Activated T-helper 2 cell treated with anti-CD3 and anti-CD28 coated beads, Interferon-gamma antibody, Interleukin-2, Interleukin-4, amounts not matched to agents 10 μg/mL and 5 μg/mL and 100 μg/mL, durations not matched to agents 14 hours and 24 hours and 36 hours (primary cell): ENCODE measurements at regions of chr15 and their contacts with region 1.

Region 1: GRCh38 chr15:58770857-58771620 is at the start of gene MINDY2:
- DNase-seq: peak; percentile 94
- H3K4me3 Mint-ChIP-seq: no peak within 1 kb of the TSS
- H3K27ac Mint-ChIP-seq: peak within 1 kb of the TSS; percentile 83
- H3K4me1 Mint-ChIP-seq: peaks cover 20% of the 10 kb centered on the region
- H3K27me3 Mint-ChIP-seq: no peaks in the 10 kb centered on the region
- total RNA-seq, gene MINDY2: 10.7 and 11.6 TPM in 2 replicates

Region 2: DNA sequence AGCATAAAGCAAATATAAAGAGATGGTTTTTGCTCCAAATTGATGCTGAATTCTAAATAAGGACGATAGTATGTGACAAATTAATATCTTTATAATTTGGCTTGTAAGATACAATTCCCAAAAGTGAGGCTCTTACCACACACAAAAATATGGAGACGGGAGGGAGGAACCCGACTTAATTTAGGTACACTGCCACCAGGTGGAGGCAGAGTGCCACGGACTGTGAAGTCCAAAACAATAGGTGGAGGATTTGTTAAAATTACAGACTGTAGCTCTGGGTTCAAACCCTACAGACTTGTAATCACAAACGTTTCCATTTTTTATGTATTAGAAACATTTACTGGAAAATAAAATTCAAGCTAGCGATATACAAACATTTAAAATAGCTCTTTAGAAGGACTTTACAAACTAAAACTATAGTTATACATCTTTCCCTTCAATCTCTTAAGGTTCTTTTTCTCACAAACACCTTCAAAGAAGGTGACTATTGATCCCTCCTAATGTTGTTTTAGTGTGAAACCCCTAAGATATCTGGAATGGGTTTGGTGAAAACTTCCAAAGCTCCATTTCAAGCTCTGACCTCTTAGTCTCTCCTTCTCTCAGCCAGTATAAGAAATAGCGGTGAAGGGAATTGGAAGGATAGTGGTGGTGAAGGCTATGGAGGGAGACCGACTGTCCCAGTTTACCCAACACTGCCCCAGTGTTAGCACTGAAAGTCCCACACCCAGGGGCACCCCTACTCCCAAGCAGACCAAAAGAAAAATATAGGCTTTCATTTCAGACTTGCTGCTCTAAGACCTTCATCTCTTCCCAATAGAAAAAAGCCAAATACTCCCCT is 543.1 kb before region 1 on chr15:
- intact Hi-C with region 1: loop called (anchors 5 kb)
- DNase-seq: peak; percentile 47
- H3K4me3 Mint-ChIP-seq: no peak overlapping the region
- H3K27ac Mint-ChIP-seq: no peak overlapping the region
- H3K4me1 Mint-ChIP-seq: peaks cover 8% of the 10 kb centered on the region
- H3K27me3 Mint-ChIP-seq: peaks cover 19% of the 10 kb centered on the region

Region 3: DNA sequence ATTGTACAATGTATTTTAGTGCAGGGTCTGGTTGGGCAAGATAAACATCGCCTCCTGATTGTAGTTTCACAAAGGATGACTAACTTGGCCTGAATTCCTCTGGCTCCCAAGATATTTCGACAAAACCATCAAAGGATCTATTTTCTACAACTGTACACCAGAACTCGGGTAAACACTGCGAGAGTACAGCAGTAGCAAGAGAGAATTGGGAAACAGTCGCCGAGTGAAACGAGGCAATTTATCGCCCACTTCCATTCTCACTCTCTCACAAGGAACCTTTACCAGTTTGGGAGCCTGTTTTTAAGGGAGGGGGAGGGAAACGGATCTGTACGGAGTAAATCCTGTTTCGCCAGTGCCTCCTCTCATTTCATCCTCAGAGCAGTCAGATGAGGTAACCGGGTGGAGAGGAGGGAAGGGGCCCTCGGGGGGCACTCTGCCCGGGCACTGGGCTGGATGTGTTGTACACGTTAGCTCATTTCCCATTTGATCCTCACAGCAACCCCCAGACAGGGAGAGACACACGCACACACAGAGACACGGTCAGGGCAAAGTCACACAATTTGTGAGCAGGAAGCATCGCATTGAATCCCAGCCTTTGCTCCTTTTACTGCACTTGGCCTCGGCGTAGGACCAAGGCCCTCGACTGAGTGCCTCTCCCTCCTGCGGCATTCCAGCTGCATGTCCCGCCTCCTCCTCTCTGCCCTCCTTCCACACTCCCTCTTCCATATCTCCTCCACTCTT is 219.1 kb before region 1 on chr15:
- intact Hi-C with region 1: loop called (anchors 5 kb)
- DNase-seq: no peak
- H3K4me3 Mint-ChIP-seq: no peak overlapping the region
- H3K27ac Mint-ChIP-seq: peak overlapping the region; percentile 91
- H3K4me1 Mint-ChIP-seq: peaks cover 39% of the 10 kb centered on the region
- H3K27me3 Mint-ChIP-seq: no peaks in the 10 kb centered on the region

Region 4: GRCh38 chr15:58641660-58642059 is 129.4 kb before region 1 on chr15:
- intact Hi-C with region 1: no loop called
- DNase-seq: no peak
- H3K4me3 Mint-ChIP-seq: no peak overlapping the region
- H3K27ac Mint-ChIP-seq: no peak overlapping the region
- H3K4me1 Mint-ChIP-seq: peaks cover 15% of the 10 kb centered on the region
- H3K27me3 Mint-ChIP-seq: no peaks in the 10 kb centered on the region

Region 5: DNA sequence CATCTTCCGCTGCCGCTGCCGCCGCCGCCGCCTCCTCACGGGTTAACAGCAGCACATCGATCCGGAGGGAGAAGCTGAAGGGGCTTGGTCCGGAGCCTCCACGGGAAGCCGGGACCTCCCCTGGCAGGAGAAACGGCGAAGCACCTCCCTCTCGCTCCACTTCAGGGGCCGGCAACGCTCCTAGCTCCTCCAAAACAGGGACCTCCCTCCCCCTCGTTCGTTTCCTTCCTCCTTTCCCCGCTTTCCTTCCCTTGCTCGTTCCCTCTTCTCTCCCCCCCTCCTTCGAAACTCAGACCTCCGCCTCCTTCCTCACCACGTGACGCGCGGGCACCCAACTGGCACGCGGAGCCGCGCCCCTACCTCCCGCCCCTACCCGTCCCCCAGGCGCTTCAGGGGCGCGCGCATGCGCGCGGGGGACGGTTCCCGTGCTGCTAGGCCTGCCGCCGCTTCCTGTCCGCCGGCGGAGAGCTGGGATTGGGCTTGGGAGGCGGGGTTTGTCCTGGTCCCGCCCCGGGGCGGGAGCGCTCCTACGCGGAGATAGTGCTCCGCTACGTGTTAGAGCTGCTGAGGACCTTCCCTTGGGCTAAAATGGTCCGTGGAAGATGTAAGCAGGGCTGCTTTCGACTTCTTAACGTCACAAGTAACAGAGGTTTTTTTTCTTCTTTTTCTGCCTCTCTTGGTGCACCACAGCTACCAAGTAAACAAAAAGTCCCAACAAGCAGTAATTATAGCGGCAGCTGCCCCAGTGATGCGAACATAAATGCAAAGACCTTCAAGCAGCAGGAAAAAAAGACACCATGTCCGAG is 21.3 kb before region 1 on chr15 and contains the start of gene ADAM10:
- intact Hi-C with region 1: loop called (anchors 1 kb)
- DNase-seq: peak; percentile 97
- H3K4me3 Mint-ChIP-seq: peak within 1 kb of the TSS; percentile 96
- H3K27ac Mint-ChIP-seq: peak within 1 kb of the TSS; percentile 99
- H3K4me1 Mint-ChIP-seq: peaks cover 32% of the 10 kb centered on the region
- H3K27me3 Mint-ChIP-seq: no peaks in the 10 kb centered on the region
- total RNA-seq, gene ADAM10: 136 and 141 TPM in 2 replicates

Region 6: GRCh38 chr15:58933281-58934113 is 162.5 kb after region 1 on chr15 and contains the start of gene SLTM:
- intact Hi-C with region 1: loop called (anchors 1 kb)
- DNase-seq: peak; percentile 89
- H3K4me3 Mint-ChIP-seq: peak within 1 kb of the TSS; percentile 97
- H3K27ac Mint-ChIP-seq: peak within 1 kb of the TSS; percentile 100
- H3K4me1 Mint-ChIP-seq: peaks cover 16% of the 10 kb centered on the region
- H3K27me3 Mint-ChIP-seq: no peaks in the 10 kb centered on the region
- total RNA-seq, gene SLTM: 108 and 120 TPM in 2 replicates